ENCODE measurements at regions of chr12 and their contacts with region 1.

Region 1: DNA sequence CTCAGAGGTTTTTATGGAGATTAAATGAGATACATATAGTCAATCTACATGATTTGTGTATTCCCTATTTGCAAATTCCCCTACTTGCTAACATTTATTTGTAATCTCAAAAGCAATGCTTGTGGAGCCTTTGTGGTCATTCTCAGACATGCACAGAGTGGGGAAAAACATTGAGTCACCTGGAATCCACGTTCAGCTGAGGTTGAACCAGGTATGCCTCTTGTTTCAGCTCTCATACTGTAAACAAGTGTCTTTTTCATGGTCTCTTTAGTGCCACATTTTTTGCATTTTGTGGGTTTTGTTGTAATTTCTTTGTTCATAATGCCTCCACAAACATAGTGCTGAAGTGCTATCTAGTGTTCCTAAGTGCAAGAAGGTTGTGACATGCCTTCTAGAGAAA is 181.9 kb downstream of the BCAT1 start:
- DNase-seq: peak; percentile 31
- H3K4me3 Mint-ChIP-seq: no peak overlapping the region
- H3K27ac Mint-ChIP-seq: no peak overlapping the region
- H3K4me1 Mint-ChIP-seq: no peaks in the 10 kb centered on the region
- H3K27me3 Mint-ChIP-seq: peaks cover 2% of the 10 kb centered on the region

Region 2: DNA sequence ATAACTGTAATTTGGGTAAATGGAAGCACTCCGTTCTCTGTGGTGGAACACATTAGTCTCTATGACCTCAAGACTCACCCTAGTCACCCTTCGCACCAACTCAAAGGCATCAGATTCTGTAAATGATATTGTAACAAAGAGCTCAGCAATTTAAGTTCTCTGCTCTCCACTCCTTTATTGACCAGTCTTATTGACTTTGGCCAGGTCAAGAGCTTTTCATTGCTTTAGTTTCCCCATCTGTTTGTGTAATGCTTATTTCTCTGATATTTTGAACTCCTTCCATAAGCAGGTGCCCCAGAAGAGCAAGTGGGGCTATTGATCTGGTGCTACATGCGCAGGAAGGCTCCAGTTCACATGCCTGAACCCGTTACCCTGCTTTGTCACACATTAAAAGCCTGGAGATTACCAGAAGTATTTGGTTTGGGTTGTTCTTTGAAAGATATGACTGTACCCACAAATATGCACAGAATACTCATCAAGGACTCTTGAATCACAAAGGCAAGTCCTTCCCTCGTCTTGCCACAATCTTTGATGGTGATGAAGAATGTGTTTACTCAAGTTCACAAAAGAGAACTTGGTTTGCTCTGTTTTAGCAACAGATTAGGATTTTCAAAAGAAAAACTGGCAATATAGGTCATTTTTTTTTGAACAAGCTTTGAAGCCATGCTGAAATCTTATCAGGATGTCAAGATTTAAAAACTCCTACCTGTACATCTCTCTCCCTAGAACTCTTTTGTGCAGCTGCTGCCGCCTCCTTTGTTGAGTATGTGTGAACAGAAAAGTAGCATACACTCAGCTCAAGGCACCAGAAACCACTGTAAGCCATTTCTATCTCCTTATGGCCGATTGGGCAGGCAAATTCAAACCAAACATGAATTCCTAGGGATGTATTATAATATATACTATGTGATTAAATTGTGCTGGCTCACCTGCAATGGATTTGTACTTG is 12.1 kb before region 1 on chr12:
- CTCF ChIA-PET with region 1: interaction called, 3 read pairs
- intact Hi-C with region 1: loop called (anchors 1 kb)
- DNase-seq: peak; percentile 25
- H3K4me3 Mint-ChIP-seq: no peak overlapping the region
- H3K27ac Mint-ChIP-seq: peak overlapping the region; percentile 74
- H3K4me1 Mint-ChIP-seq: peaks cover 12% of the 10 kb centered on the region
- H3K27me3 Mint-ChIP-seq: peaks cover 19% of the 10 kb centered on the region

Measured in activated naive CD4-positive, alpha-beta T cell treated with anti-CD3 and anti-CD28 coated beads for 36 hours (primary cell).